ENCODE measurements at regions of chr12 and their contacts with region 1.

Region 1: DNA sequence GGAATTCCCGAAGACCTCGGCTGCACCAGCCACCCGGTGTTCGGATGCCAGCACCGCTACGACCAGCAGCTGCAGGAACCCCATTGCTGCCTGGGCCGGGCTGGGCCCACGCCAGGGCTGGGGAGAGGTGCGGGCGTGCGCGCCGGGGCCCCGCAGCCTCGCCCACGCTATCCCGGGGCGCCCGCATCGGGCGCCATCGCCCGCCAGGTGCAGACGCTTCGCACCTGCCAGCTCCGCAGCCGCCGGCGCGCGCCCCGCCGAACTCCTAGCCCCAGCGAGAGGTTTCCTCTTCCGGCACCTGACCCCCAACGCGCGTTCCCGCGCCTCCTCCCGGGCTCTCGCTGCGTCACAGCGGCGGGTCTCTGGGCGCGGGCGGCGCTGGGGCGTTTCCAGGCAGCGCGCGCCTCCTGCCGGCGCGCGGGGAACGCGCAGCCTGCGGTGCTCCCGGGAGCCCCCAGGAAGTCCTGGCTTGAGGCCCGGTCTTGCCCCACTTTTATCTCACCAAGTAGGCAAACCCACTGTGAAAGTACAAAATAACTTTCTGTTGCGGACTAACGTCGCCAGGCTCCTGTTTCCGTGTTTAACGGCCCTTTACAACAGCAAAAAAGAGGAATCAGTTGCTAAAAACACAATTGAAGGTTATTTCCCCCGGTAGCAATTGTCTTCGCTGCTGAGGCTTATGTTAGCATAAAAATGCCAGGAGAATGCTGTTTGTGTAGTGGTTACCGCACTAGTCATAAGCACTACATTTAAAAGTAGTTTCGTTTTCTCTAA is at the start of gene TM7SF3:
- DNase-seq: peak; percentile 83
- H3K4me3 ChIP-seq: peak within 1 kb of the TSS; percentile 48 to 89 (median 65)
- H3K27ac ChIP-seq: peak within 1 kb of the TSS; percentile 81
- H3K4me1 ChIP-seq: peaks cover 11% of the 10 kb centered on the region
- H3K27me3 ChIP-seq: no peaks in the 10 kb centered on the region
- CTCF ChIP-seq: peak; percentile 87 to 99
- POLR2A ChIP-seq: peak; percentile 55
- total RNA-seq, gene TM7SF3: 51.0 and 54.8 TPM in 2 replicates

Region 2: GRCh38 chr12:26832822-26833742 is 181.2 kb before region 1 on chr12 and contains the start of gene ITPR2:
- CTCF ChIA-PET with region 1: interaction called, 14 read pairs
- POLR2A ChIA-PET with region 1: no interaction called
- dilution Hi-C with region 1: no loop called
- intact Hi-C with region 1: no loop called
- DNase-seq: peak; percentile 89
- H3K4me3 ChIP-seq: peak within 1 kb of the TSS; percentile 72 to 91 (median 78)
- H3K27ac ChIP-seq: peak within 1 kb of the TSS; percentile 96
- H3K4me1 ChIP-seq: peaks cover 23% of the 10 kb centered on the region
- H3K27me3 ChIP-seq: no peaks in the 10 kb centered on the region
- CTCF ChIP-seq: peak in 1 of 2 donors; percentile 12
- POLR2A ChIP-seq: peak; percentile 91
- total RNA-seq, gene ITPR2: 86.8 and 88.5 TPM in 2 replicates

Region 3: DNA sequence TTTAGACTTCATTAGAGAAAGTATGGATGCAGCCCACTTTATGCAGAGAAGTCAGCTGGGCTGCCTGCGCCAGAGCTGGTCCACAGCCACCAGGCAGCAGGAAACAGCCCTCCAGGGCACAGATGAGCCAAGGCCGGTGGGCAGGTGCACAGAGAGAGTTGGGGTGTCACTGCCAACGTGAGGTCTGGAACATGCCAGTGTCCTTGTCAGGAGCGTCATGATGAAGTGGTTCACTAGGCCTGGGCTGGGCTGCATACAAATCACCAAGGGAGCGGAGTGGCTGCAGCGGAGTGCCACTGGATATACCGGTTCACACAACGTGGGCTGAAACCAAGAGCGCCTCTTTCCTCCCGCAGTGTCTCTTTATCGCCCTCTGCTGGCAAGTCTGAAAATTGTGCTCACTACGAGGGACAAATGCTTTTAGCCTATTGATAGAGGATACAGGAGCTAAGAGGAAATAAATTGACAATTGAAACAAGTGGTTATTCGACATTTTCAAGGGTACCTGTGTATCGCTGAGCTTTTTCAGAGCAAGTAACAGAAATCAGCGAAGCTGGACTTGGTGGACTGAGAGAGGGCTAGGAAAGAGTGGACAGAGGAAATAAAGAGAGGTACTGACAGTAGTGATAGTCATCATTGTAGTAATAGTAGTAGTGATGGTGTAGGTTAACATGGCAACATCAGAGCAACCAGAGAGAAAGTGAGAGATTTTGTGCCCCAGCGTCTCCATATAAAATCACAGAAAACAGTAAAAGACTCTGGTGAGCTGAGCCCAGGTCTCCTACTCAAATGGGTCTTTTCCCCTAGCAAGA is 129.3 kb before region 1 on chr12:
- CTCF ChIA-PET with region 1: interaction called, 13 read pairs
- POLR2A ChIA-PET with region 1: no interaction called
- dilution Hi-C with region 1: no loop called
- intact Hi-C with region 1: loop called (anchors 1 kb)
- DNase-seq: peak; percentile 83
- H3K4me3 ChIP-seq: no peak overlapping the region
- H3K27ac ChIP-seq: no peak overlapping the region
- H3K4me1 ChIP-seq: peaks cover 2% of the 10 kb centered on the region
- H3K27me3 ChIP-seq: no peaks in the 10 kb centered on the region
- CTCF ChIP-seq: peak; percentile 88 to 90
- POLR2A ChIP-seq: no peak

Region 4: DNA sequence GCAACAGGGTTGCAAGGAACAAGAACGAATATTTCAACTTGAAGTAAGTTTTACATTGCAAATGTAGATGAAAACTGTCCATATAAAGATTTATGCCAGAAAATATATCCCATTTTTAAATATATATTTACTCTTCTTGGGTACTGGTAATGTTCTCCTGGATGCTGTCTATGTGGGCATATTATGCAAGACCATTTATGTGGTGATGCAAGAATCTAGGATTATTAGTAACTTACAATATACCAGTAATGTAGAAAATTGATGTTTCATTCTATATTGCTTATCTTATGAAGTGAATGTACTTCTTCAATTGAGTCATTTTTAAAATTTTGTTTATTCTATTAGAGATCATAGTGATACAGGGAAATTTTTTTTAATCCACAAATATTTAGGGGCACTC is 50.9 kb before region 1 on chr12:
- CTCF ChIA-PET with region 1: interaction called, 11 read pairs
- POLR2A ChIA-PET with region 1: no interaction called
- dilution Hi-C with region 1: no loop called
- intact Hi-C with region 1: no loop called
- DNase-seq: no peak
- H3K4me3 ChIP-seq: no peak overlapping the region
- H3K27ac ChIP-seq: no peak overlapping the region
- H3K4me1 ChIP-seq: no peaks in the 10 kb centered on the region
- H3K27me3 ChIP-seq: no peaks in the 10 kb centered on the region
- CTCF ChIP-seq: no peak
- POLR2A ChIP-seq: no peak

Region 5: GRCh38 chr12:27024291-27024690 is 10.0 kb after region 1 on chr12:
- CTCF ChIA-PET with region 1: interaction called, 14 read pairs
- POLR2A ChIA-PET with region 1: no interaction called
- dilution Hi-C with region 1: no loop called
- intact Hi-C with region 1: no loop called
- DNase-seq: no peak
- H3K4me3 ChIP-seq: no peak overlapping the region
- H3K27ac ChIP-seq: no peak overlapping the region
- H3K4me1 ChIP-seq: peaks cover 5% of the 10 kb centered on the region
- H3K27me3 ChIP-seq: no peaks in the 10 kb centered on the region
- CTCF ChIP-seq: no peak
- POLR2A ChIP-seq: no peak

Region 6: DNA sequence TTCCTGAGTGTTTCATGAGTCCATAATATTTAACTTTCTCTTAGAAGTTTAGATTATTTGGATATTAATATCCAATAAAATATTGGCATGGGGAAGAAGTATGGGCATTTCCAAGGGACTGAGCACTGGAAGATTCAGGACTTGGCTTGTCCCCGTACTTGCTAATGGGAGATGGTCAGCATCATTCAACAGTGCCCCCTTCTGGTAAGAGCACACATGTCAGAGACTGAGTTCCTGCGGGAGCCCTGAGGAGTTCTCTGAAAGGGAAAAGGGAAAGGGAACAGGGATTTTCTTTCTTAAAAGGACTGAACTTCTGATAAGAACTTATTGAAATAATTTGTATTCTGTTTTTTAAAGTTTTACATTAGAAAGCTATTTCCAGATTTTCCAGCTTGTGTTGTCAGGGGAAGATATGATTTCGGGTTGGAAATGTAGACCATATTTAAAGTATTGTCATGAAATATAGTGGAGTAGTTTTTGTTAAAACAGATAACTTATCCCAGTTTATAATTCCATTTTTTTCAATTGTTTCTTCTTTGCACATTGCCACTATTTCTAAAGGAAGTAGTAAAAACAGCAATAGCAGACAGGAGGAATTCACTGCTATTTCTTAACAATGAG is 127.9 kb after region 1 on chr12:
- CTCF ChIA-PET with region 1: interaction called, 28 read pairs
- POLR2A ChIA-PET with region 1: no interaction called
- dilution Hi-C with region 1: no loop called
- intact Hi-C with region 1: loop called (anchors 1 kb)
- DNase-seq: peak; percentile 83
- H3K4me3 ChIP-seq: no peak overlapping the region
- H3K27ac ChIP-seq: no peak overlapping the region
- H3K4me1 ChIP-seq: peaks cover 2% of the 10 kb centered on the region
- H3K27me3 ChIP-seq: no peaks in the 10 kb centered on the region
- CTCF ChIP-seq: peak; percentile 79 to 86
- POLR2A ChIP-seq: no peak

Region 7: DNA sequence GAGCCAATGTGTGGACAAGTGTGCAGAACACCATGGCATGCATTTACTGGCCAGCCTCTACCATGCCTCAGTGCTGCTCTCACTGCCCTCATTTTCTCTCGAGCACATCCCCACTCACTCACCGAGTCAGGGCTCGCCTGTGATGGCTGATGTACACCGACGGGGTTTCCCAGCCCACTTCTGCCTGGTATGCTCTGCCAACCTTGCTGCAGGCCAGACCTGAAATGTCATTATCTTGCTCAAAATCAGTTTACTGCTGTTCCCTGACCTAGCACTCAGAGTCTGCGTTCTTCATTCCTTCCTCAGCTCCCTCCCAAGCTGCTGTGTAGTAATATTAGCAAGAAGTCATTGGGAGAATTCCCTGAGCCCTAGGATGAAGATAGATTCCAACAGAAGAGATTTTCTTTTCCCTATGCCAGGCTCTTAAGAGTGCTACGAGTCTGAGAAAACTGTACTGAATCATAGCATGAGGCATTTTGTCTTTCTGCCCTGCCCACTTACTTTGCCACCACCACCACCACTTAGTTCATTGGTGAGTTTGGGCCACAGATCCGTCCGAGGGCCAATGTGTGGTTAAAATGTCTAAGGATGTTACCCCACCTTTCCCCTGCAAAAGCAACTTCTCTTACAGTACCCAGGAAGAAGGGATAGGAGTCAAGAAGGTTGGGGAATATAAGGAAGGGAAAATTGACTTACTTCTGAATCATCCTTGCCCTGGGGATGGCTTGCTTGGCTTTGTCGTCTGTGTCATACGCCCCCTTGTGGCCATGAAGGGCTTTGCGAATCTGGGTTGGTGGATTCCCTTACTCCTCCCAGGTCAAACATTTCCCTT is 369.4 kb after region 1 on chr12:
- CTCF ChIA-PET with region 1: interaction called, 6 read pairs
- POLR2A ChIA-PET with region 1: no interaction called
- dilution Hi-C with region 1: no loop called
- intact Hi-C with region 1: loop called (anchors 10 kb)
- DNase-seq: peak; percentile 80
- H3K4me3 ChIP-seq: no peak overlapping the region
- H3K27ac ChIP-seq: no peak overlapping the region
- H3K4me1 ChIP-seq: no peaks in the 10 kb centered on the region
- H3K27me3 ChIP-seq: no peaks in the 10 kb centered on the region
- CTCF ChIP-seq: peak; percentile 89 to 93
- POLR2A ChIP-seq: no peak